ENCODE measurements at regions of chr17 and their contacts with region 1.

Region 1: DNA sequence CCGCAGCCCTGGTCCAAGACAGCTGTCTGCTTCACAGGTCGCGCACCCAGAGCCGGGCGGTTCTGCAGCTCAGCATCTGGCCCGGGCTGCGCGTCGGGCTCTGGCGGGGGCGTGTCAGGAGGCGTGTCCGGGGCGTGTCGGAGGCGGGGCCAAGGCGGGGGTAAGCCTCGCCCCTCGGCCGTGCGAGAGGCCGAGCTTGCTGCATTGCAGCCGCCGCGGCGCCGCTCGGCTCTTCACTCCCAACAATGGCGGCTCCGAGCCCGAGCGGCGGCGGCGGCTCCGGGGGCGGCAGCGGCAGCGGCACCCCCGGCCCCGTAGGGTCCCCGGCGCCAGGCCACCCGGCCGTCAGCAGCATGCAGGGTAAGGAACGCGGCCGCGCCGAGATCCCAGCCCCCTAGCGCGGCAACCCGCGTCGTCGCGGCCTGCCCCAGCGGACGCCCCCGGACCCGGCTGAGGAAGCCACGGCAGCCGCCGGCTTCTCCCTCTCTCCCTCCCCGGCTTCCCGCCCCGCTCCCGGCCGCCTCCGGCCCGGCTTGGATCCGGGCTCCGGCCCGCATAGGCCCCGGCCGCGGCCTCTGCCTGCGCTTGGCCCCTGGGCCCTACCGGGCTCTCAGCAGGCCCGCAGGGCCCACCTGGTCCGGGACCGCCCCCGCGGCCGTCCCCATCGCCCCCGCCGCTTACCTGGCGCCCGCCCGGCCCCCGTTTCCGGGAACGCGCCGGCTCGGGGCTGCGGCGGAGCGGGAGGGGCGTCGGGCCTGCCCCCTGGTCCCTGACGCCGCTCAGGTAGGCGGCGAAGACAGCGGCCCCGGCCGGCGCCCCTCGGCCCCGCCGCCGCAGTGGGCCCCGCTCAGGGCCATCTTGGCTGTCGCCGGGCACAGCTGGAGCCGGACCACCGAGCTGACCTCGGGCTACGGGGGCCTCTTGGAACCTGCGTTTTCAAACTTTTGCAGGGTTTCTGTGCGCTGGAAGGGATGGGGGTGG is at the start of gene MAP2K4:
- DNase-seq: peak; percentile 93
- ATAC-seq: peak; percentile 96
- H3K4me3 Mint-ChIP-seq: peak within 1 kb of the TSS; percentile 75
- H3K27ac Mint-ChIP-seq: peak within 1 kb of the TSS; percentile 74
- H3K4me1 Mint-ChIP-seq: peaks cover 27% of the 10 kb centered on the region
- H3K27me3 Mint-ChIP-seq: peaks cover 8% of the 10 kb centered on the region
- total RNA-seq, gene MAP2K4: 22.1 to 29.9 TPM

Region 2: GRCh38 chr17:11935734-11936406 is 85.1 kb before region 1 on chr17:
- CTCF ChIA-PET with region 1: no interaction called
- DNase-seq: peak; percentile 47
- ATAC-seq: no peak
- H3K4me3 Mint-ChIP-seq: no peak overlapping the region
- H3K27ac Mint-ChIP-seq: no peak overlapping the region
- H3K4me1 Mint-ChIP-seq: no peaks in the 10 kb centered on the region
- H3K27me3 Mint-ChIP-seq: no peaks in the 10 kb centered on the region

Region 3: GRCh38 chr17:11948789-11949188 is 72.1 kb before region 1 on chr17:
- CTCF ChIA-PET with region 1: no interaction called
- DNase-seq: no peak
- ATAC-seq: no peak
- H3K4me3 Mint-ChIP-seq: no peak overlapping the region
- H3K27ac Mint-ChIP-seq: no peak overlapping the region
- H3K4me1 Mint-ChIP-seq: no peaks in the 10 kb centered on the region
- H3K27me3 Mint-ChIP-seq: no peaks in the 10 kb centered on the region

Region 4: GRCh38 chr17:11997147-11997846 is 23.6 kb before region 1 on chr17 and contains the start of gene ZNF18:
- CTCF ChIA-PET with region 1: interaction called, 14 read pairs
- DNase-seq: peak; percentile 97
- ATAC-seq: peak; percentile 99
- H3K4me3 Mint-ChIP-seq: peak within 1 kb of the TSS; percentile 95
- H3K27ac Mint-ChIP-seq: peak within 1 kb of the TSS; percentile 91
- H3K4me1 Mint-ChIP-seq: peaks cover 21% of the 10 kb centered on the region
- H3K27me3 Mint-ChIP-seq: no peaks in the 10 kb centered on the region
- total RNA-seq, gene ZNF18: 9.3 to 11.9 TPM

Measured in activated CD8-positive, alpha-beta memory T cell treated with anti-CD3 and anti-CD28 coated beads, Interleukin-2, amount 10 ng/mL, durations not matched to agents 7 days and 5 days (primary cell).